ENCODE measurements at regions of chr10 and their contacts with region 1.

Region 1: GRCh38 chr10:53387562-53387961 is 615.0 kb upstream of the MBL2 start:
- DNase-seq: no peak
- H3K4me3 ChIP-seq: no peak overlapping the region
- H3K27ac ChIP-seq: no peak overlapping the region
- H3K4me1 ChIP-seq: no peaks in the 10 kb centered on the region
- H3K27me3 ChIP-seq: no peaks in the 10 kb centered on the region
- CTCF ChIP-seq: no peak
- POLR2A ChIP-seq: no peak

Region 2: DNA sequence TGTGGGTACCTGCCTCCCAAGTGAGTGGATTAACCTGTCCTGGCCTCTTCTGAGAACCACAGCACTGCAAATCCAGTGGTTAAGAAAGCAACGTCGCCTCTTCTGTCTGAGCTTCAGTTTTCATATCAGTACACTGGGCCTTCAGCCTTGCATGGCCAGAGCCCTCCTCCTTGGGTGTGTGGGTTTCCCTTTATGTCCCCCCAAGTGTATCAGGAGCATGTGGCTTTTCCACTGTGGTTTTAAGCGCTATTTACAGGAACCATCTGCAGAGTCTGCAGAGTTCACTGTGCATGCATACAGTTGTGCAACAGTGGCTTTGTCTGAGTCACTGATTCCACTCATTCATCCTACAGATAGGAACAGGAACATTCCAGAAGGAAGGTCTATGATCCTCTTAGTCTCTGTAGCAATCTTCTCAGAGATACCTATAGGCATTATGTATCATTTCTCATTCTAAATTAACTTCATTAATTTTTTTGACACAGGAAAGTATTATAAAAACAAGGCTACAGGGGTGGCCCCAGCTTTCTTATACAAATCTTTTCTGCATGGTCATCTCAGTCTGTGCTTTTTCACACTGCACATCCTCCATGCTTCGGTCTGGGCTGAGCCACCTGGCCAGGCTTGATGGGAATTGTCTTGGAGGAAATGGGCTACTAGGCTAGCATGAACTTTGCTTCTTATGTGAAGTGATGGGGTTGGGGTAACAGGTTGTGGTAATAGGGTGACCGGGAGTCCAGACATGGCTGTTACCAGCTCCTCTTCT is 632.1 kb before region 1 on chr10:
- intact Hi-C with region 1: no loop called
- DNase-seq: no peak
- H3K4me3 ChIP-seq: no peak overlapping the region
- H3K27ac ChIP-seq: no peak overlapping the region
- H3K4me1 ChIP-seq: no peaks in the 10 kb centered on the region
- H3K27me3 ChIP-seq: no peaks in the 10 kb centered on the region
- CTCF ChIP-seq: no peak
- POLR2A ChIP-seq: no peak

Region 3: GRCh38 chr10:53025172-53025711 is 362.3 kb before region 1 on chr10:
- intact Hi-C with region 1: loop called (anchors 5 kb)
- DNase-seq: no peak
- H3K4me3 ChIP-seq: peak overlapping the region; percentile 17 to 39 (median 33)
- H3K27ac ChIP-seq: no peak overlapping the region
- H3K4me1 ChIP-seq: no peaks in the 10 kb centered on the region
- H3K27me3 ChIP-seq: no peaks in the 10 kb centered on the region
- CTCF ChIP-seq: no peak
- POLR2A ChIP-seq: no peak

Region 4: GRCh38 chr10:53314876-53315275 is 72.7 kb before region 1 on chr10:
- intact Hi-C with region 1: no loop called
- DNase-seq: no peak
- H3K4me3 ChIP-seq: no peak overlapping the region
- H3K27ac ChIP-seq: no peak overlapping the region
- H3K4me1 ChIP-seq: no peaks in the 10 kb centered on the region
- H3K27me3 ChIP-seq: no peaks in the 10 kb centered on the region
- CTCF ChIP-seq: no peak
- POLR2A ChIP-seq: no peak

Region 5: DNA sequence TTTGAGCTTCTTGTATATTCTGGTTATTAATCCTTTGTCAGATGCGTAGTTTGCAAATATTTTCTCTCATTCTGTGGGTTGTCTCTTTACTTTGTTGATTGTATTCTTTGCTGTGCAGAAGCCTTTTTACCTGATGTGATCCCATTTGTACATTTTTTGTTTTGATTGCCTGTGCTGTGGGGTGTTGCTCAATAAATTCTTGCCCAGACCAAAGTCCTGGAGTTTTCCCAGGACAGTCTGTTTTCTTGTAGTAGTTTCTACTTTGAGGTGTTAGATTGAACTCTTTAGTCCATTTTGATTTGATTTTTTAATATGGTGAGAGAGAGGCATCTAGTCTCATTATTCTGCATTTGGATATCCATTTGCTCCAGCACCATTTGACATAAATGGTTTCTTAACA is 26.3 kb before region 1 on chr10:
- intact Hi-C with region 1: no loop called
- DNase-seq: no peak
- H3K4me3 ChIP-seq: no peak overlapping the region
- H3K27ac ChIP-seq: no peak overlapping the region
- H3K4me1 ChIP-seq: no peaks in the 10 kb centered on the region
- H3K27me3 ChIP-seq: no peaks in the 10 kb centered on the region
- CTCF ChIP-seq: no peak
- POLR2A ChIP-seq: no peak